ENCODE measurements at regions of chr4 and their contacts with region 1.

Region 1: GRCh38 chr4:58732973-58733372 is 1622.8 kb upstream of the IGFBP7 start:
- DNase-seq: no peak
- ATAC-seq: peak; percentile 54
- H3K4me3 ChIP-seq: no peak overlapping the region
- H3K27ac ChIP-seq: no peak overlapping the region
- H3K4me1 ChIP-seq: no peaks in the 10 kb centered on the region
- H3K27me3 ChIP-seq: no peaks in the 10 kb centered on the region
- CTCF ChIP-seq: peak; percentile 37
- POLR2A ChIP-seq: no peak
- RAD21 ChIP-seq: peak; percentile 53

Region 2: DNA sequence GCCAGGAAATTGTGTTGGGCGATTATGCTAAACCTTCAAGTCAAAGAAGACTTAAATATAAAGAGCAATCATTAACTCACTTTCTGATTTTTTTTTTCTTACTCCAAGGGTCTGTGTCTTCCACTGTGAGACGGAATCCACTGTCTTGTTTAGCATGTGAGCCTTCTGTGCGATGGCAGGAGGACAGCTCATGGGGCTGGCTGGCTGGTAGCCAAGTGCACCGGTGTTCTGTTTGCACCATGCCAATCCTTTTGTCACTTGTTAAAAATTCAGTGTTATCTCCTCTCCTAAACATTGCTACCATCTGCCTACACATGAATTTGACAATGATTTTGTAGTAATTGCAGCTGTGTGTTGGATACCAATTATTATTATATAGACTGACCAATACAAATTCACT is 566.5 kb before region 1 on chr4:
- CTCF ChIA-PET with region 1: no interaction called
- POLR2A ChIA-PET with region 1: no interaction called
- dilution Hi-C with region 1: no loop called
- in situ Hi-C with region 1: no loop called
- intact Hi-C with region 1: no loop called
- DNase-seq: no peak
- ATAC-seq: no peak
- H3K4me3 ChIP-seq: no peak overlapping the region
- H3K27ac ChIP-seq: no peak overlapping the region
- H3K4me1 ChIP-seq: no peaks in the 10 kb centered on the region
- H3K27me3 ChIP-seq: no peaks in the 10 kb centered on the region
- CTCF ChIP-seq: no peak
- POLR2A ChIP-seq: no peak
- RAD21 ChIP-seq: no peak

Region 3: GRCh38 chr4:58360354-58361133 is 372.4 kb before region 1 on chr4:
- CTCF ChIA-PET with region 1: no interaction called
- POLR2A ChIA-PET with region 1: no interaction called
- dilution Hi-C with region 1: no loop called
- in situ Hi-C with region 1: no loop called
- intact Hi-C with region 1: no loop called
- DNase-seq: no peak
- ATAC-seq: no peak
- H3K4me3 ChIP-seq: no peak overlapping the region
- H3K27ac ChIP-seq: no peak overlapping the region
- H3K4me1 ChIP-seq: no peaks in the 10 kb centered on the region
- H3K27me3 ChIP-seq: no peaks in the 10 kb centered on the region
- CTCF ChIP-seq: no peak
- POLR2A ChIP-seq: no peak
- RAD21 ChIP-seq: no peak

Region 4: DNA sequence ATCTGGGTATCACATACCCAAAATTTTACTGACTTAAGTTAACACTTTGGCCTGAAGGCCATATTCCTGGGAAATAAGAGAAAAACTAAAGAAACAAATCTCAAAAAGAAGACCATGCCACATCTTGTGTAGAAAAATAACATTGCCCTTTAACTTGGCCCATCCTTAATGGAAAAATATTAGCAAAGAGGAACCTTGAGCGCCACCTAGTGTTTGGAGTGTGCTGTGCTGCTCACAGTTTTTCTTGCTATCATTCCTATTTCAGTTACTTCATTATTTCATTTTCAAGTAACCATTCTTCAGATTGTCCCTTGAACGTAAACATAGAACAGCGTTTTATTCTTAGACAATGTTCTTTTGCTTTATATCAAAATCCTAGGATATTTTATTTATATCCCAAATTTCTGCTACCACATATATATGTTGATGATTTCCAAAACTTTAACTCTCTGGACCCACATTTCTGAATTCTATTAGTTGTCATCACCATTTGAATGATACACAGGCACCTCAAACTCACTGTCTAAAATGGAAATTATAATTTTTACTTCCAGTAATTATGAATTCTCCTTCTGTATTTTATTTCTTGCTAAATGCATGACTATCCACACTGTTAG is 1468.2 kb after region 1 on chr4:
- CTCF ChIA-PET with region 1: no interaction called
- POLR2A ChIA-PET with region 1: no interaction called
- dilution Hi-C with region 1: no loop called
- in situ Hi-C with region 1: no loop called
- intact Hi-C with region 1: loop called (anchors 2 kb)
- DNase-seq: peak; percentile 28
- ATAC-seq: peak; percentile 64
- H3K4me3 ChIP-seq: no peak overlapping the region
- H3K27ac ChIP-seq: no peak overlapping the region
- H3K4me1 ChIP-seq: no peaks in the 10 kb centered on the region
- H3K27me3 ChIP-seq: no peaks in the 10 kb centered on the region
- CTCF ChIP-seq: peak; percentile 72
- POLR2A ChIP-seq: no peak
- RAD21 ChIP-seq: peak; percentile 72